Panc1 (cell line): ENCODE measurements at regions of chr15 and their contacts with region 1.

Region 1: GRCh38 chr15:92797168-92797951 is 102.8 kb upstream of the CHD2 start:
- DNase-seq: no peak
- ATAC-seq: peak; percentile 81
- H3K4me3 ChIP-seq: no peak overlapping the region
- H3K27ac ChIP-seq: peak overlapping the region; percentile 82
- H3K4me1 ChIP-seq: peaks cover 24% of the 10 kb centered on the region
- H3K27me3 ChIP-seq: no peaks in the 10 kb centered on the region
- CTCF ChIP-seq: no peak

Region 2: DNA sequence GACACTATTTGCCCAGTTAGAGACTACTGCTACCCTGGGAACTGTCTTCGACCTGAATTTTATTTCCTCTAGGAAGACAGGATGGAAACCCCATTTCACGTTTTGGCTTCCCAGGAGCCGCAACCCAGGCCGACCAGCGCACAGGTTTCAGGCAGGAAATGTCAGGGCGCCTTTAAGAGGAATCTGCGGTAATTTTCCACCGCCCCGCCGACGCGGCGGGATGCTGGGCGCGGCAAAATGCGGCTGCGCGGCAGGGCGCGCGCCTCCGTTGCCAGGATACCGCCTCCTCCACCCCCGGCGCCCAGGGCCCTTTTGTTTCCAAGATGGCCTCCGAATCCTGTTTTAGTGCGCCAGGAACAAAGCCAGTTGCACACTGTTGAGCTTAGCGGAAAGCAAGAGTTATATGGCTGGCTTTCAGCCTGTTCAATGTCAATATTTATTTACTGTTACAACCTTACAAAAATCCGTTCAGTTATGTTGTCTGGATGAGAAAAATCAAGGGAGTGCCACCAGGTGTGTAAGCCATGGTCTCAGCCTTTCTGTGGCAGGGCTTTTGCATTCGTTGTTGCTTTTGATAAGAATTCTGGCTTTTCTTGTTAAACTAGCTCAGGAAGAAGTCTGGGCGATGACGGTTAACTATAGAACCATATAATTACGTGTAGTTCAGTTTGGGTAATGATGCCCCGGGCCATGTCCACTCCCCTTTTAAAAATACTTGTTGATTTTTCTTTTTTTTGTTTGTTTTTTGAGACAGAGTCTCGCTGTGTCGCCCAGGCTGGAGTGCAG is 23.1 kb after region 1 on chr15:
- CTCF ChIA-PET with region 1: interaction called, 15 read pairs
- POLR2A ChIA-PET with region 1: interaction called, 3 read pairs
- in situ Hi-C with region 1: no loop called
- intact Hi-C with region 1: no loop called
- DNase-seq: no peak
- ATAC-seq: peak; percentile 88
- H3K4me3 ChIP-seq: peak overlapping the region; percentile 33 to 48
- H3K27ac ChIP-seq: peak overlapping the region; percentile 100
- H3K4me1 ChIP-seq: peaks cover 73% of the 10 kb centered on the region
- H3K27me3 ChIP-seq: no peaks in the 10 kb centered on the region
- CTCF ChIP-seq: no peak

Region 3: GRCh38 chr15:93018580-93018979 is 221.2 kb after region 1 on chr15:
- CTCF ChIA-PET with region 1: no interaction called
- POLR2A ChIA-PET with region 1: no interaction called
- in situ Hi-C with region 1: no loop called
- intact Hi-C with region 1: loop called (anchors 10 kb)
- DNase-seq: no peak
- ATAC-seq: peak; percentile 49
- H3K4me3 ChIP-seq: no peak overlapping the region
- H3K27ac ChIP-seq: no peak overlapping the region
- H3K4me1 ChIP-seq: no peaks in the 10 kb centered on the region
- H3K27me3 ChIP-seq: no peaks in the 10 kb centered on the region
- CTCF ChIP-seq: peak; percentile 56; the same call in 1 of the 2 replicates